Common myeloid progenitor, CD34-positive (primary cell): ENCODE measurements at regions of chr11 and their contacts with region 1.

Region 1: GRCh38 chr11:76610871-76611475 is 59.6 kb downstream of the LRRC32 start:
- DNase-seq: peak; percentile 42 to 53 (median 53)
- H3K4me3 ChIP-seq: no peak overlapping the region
- H3K27ac ChIP-seq: no peak overlapping the region
- H3K4me1 ChIP-seq: peaks cover 0 to 13% (median 5%) of the 10 kb centered on the region in 4 experiments
- H3K27me3 ChIP-seq: peaks cover 0 to 2% (median 0%) of the 10 kb centered on the region in 5 experiments

Region 2: GRCh38 chr11:76626921-76627401 is 16.0 kb after region 1 on chr11:
- CTCF ChIA-PET with region 1: interaction called, 20 read pairs
- POLR2A ChIA-PET with region 1: interaction called, 3 read pairs
- DNase-seq: peak; percentile 87 to 98 (median 98)
- H3K4me3 ChIP-seq: peak overlapping the region in 1 of 7 experiments; percentile 44
- H3K27ac ChIP-seq: no peak overlapping the region
- H3K4me1 ChIP-seq: peaks cover 7 to 37% (median 35%) of the 10 kb centered on the region in 4 experiments
- H3K27me3 ChIP-seq: peaks cover 0 to 12% (median 3%) of the 10 kb centered on the region in 5 experiments

Region 3: DNA sequence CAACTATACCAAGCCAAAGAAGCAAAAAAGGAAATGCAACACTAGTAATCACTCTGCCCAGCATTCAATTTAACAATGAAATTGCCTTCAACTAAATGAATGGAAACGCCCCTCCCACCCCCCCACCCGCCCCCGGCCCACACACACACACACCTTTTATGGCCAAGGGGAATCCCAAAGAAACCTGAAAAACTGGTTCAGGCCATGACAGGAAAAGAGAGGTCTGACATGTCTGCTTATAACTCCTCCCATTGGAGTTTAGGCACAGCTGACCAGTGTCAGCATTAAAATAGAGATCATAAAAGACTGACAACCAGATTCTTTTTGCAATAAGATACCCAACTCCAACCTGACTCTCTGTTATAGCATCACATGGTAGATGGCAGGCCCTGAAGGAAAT is 292.4 kb after region 1 on chr11:
- CTCF ChIA-PET with region 1: no interaction called
- POLR2A ChIA-PET with region 1: no interaction called
- DNase-seq: no peak
- H3K4me3 ChIP-seq: no peak overlapping the region
- H3K27ac ChIP-seq: no peak overlapping the region
- H3K4me1 ChIP-seq: no peaks in the 10 kb centered on the region
- H3K27me3 ChIP-seq: no peaks in the 10 kb centered on the region